Cardiac septum (tissue), 1 donor: ENCODE measurements at regions of chr3 and their contacts with region 1.

Region 1: DNA sequence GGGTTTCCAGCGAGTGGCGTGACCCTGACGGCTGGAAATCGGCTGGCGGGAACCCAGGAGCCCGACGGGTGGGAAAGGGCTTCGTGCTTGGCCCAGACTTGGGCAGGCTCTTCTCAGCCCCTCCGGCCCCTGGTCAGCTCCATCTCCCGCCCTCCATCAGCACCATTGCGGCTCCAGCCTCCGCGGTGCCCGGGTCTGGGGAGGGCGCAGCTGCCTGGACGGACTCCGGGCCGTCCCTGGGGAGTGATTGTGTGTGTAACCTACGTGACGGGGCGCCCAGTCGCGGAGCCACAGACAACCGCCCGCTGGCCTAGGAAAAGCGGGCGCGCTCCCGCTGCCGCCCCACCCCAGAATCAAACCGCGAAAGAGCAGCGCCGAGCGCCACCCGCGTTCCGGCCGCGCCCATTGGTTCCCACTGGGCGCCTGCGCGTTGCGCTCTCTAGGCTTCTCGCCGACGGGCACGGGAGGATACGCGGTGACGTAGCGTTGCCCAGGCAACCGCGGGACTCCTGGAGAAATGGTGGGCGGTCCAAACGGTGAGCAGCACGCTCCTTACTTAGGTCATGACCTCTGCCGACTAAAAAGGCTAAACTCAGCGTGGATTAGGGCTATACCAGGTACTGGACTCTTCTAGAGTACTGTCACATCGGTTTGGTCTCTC is at the start of gene CFAP20DC:
- DNase-seq: peak; percentile 90
- total RNA-seq, gene CFAP20DC: 0.08 TPM

Region 2: GRCh38 chr3:58111513-58112186 is 938.2 kb before region 1 on chr3:
- intact Hi-C with region 1: no loop called
- DNase-seq: no peak

Region 3: DNA sequence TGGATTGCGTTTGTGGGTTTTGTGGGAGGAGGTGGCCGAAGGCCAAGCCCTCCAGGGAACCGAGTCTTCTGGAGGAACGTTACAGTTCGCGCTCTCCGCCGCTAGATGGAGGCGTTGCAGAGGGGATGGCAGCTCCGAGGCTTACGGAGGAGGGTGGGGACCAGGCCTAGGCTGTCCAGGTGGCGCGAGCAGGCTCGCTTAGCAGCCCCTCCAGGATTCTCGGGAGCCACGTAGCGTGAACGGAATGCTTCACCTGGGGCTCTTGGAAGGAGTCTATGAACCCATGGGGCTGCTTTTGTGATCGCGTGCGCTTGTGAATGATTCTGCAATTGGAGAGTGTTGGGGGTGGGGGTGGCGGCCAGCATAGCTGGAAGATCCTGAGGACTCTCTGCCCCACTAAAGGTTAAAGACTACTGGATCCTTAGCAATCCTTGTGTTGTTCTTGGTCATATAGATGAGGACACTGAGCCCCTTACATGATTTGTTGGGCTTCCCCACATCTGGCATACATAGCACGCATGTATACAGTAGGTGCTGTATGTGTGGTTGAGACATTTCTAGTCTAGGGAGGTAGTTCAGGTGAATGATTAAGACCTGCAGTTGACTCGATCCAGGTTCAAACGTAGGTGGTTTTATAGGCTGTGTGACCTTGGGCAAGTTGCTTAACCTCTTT is 409.0 kb before region 1 on chr3:
- intact Hi-C with region 1: loop called (anchors 5 kb)
- DNase-seq: peak; percentile 83

Region 4: DNA sequence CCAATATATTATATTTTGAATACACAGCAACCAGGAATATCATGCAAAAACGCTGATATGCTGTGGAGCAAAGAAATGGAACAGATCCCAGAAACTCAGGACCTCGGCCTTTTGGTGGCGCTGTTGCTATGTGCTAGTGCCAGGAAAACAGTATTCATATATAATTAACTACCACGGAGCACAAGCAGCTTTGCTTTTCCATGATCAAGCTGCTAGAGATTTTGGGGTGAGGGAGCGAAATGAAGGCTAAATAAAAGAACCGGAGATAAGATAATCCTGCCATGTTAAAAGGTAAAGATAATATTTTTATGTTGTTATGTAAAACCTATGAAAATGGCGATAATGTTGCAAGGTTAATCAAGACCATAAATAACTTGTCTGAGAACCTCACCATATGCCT is 225.5 kb before region 1 on chr3:
- intact Hi-C with region 1: loop called (anchors 10 kb)
- DNase-seq: no peak

Region 5: DNA sequence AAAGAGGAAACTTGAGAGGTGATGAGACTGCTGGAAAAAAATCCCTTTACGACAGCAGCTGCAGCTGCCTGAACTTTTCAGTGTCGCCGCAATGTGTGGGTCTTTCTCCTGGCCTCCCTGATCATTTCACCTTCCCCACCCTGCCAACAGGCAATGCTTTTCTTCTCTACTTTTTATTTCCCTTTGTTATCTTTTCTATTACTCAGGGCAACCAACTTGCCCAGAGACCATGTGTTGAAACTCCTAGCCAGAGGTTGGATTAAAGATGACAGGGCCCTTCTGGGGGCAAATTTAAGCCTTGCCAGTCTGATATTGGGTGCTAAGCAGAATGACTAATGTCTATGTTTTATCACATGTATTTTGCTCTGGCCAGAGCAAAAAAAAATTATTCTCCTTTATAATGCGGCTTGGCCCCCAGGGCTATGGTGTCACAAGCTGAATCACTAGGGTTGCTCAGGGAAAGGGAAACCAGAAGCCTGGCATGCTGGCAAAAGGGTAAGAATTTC is 51.5 kb after region 1 on chr3:
- intact Hi-C with region 1: no loop called
- DNase-seq: no peak

Region 6: GRCh38 chr3:59213860-59214259 is 164.1 kb after region 1 on chr3:
- intact Hi-C with region 1: no loop called
- DNase-seq: no peak